Psoas muscle (tissue), 8 donors: ENCODE measurements at regions of chr21 and their contacts with region 1.

Region 1: GRCh38 chr21:44801468-44802395 is at the start of gene UBE2G2:
- DNase-seq: peak; percentile 86 to 92
- ATAC-seq: peak; percentile 96 to 99 (median 97)
- H3K4me3 ChIP-seq: peak within 1 kb of the TSS; percentile 86
- H3K27ac ChIP-seq: peak within 1 kb of the TSS; percentile 91
- H3K4me1 ChIP-seq: peaks cover 18% of the 10 kb centered on the region
- H3K27me3 ChIP-seq: no peaks in the 10 kb centered on the region
- CTCF ChIP-seq: no peak
- total RNA-seq, gene UBE2G2: 64.9 to 93.8 (median 81.7) TPM

Region 2: GRCh38 chr21:44723177-44724131 is 78.3 kb before region 1 on chr21:
- intact Hi-C with region 1: no loop called
- DNase-seq: no peak
- ATAC-seq: no peak
- H3K4me3 ChIP-seq: no peak overlapping the region
- H3K27ac ChIP-seq: no peak overlapping the region
- H3K4me1 ChIP-seq: no peaks in the 10 kb centered on the region
- H3K27me3 ChIP-seq: peaks cover 0 to 78% (median 10%) of the 10 kb centered on the region in 3 donors
- CTCF ChIP-seq: no peak

Region 3: GRCh38 chr21:44817506-44817880 is 15.8 kb after region 1 on chr21:
- intact Hi-C with region 1: loop called in 1 of 2 experiments (anchors 1 kb)
- DNase-seq: peak; percentile 91 to 97
- ATAC-seq: peak; percentile 92 to 96 (median 94)
- H3K4me3 ChIP-seq: peak overlapping the region; percentile 92
- H3K27ac ChIP-seq: peak overlapping the region; percentile 92
- H3K4me1 ChIP-seq: peaks cover 13% of the 10 kb centered on the region
- H3K27me3 ChIP-seq: no peaks in the 10 kb centered on the region
- CTCF ChIP-seq: no peak

Region 4: GRCh38 chr21:44873356-44874239 is 71.9 kb after region 1 on chr21 and contains the start of gene PTTG1IP:
- intact Hi-C with region 1: loop called (anchors 2 to 5 kb)
- DNase-seq: peak; percentile 99 to 100
- ATAC-seq: peak; percentile 76 to 82 (median 80)
- H3K4me3 ChIP-seq: peak within 1 kb of the TSS; percentile 90
- H3K27ac ChIP-seq: peak within 1 kb of the TSS; percentile 97
- H3K4me1 ChIP-seq: peaks cover 49% of the 10 kb centered on the region
- H3K27me3 ChIP-seq: no peaks in the 10 kb centered on the region
- CTCF ChIP-seq: no peak
- total RNA-seq, gene PTTG1IP: 49.6 to 72.1 (median 66.5) TPM

Region 5: DNA sequence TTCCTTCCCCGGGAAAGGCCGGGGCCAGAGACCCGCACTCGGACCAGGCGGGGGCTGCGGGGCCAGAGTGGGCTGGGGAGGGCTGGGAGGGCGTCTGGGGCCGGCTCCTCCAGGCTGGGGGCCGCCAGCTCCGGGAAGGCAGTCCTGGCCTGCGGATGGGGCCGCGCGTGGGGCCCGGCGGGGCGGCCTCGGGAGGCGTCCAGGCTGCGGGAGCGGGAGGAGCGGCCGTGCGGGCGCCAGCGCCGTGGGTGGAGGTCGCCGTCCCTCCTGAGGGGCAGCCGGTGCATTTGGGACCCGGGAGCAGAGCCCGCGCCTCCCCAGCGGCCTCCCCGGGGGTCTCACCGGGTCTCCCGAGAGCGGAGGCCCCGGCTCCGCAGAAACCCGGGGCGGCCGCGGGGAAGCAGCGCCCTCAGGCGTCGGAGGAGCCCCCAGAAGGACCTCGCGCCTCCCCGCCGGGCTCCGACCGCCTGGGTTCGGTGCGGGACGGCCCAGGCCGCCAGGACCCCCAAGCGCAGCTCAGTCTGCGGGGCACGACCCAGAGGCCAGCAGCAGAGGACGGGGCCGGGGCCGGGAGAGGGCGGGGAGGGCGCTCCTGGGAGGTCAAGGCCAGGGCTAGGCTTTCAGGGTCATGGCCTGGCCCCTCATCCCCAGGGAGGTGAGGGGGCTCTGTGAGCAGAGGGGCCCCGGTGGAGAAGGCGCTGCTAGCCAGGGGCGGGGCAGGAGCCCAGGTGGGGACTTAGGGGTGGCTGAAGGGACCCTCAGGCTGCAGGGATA is 130.9 kb after region 1 on chr21:
- intact Hi-C with region 1: loop called in 1 of 2 experiments (anchors 5 kb)
- DNase-seq: peak; percentile 49 to 70
- ATAC-seq: peak; percentile 59 to 69 (median 62)
- H3K4me3 ChIP-seq: peak overlapping the region; percentile 63
- H3K27ac ChIP-seq: no peak overlapping the region
- H3K4me1 ChIP-seq: peaks cover 23% of the 10 kb centered on the region
- H3K27me3 ChIP-seq: peaks cover 0 to 58% (median 16%) of the 10 kb centered on the region in 3 donors
- CTCF ChIP-seq: peak; percentile 49

Region 6: DNA sequence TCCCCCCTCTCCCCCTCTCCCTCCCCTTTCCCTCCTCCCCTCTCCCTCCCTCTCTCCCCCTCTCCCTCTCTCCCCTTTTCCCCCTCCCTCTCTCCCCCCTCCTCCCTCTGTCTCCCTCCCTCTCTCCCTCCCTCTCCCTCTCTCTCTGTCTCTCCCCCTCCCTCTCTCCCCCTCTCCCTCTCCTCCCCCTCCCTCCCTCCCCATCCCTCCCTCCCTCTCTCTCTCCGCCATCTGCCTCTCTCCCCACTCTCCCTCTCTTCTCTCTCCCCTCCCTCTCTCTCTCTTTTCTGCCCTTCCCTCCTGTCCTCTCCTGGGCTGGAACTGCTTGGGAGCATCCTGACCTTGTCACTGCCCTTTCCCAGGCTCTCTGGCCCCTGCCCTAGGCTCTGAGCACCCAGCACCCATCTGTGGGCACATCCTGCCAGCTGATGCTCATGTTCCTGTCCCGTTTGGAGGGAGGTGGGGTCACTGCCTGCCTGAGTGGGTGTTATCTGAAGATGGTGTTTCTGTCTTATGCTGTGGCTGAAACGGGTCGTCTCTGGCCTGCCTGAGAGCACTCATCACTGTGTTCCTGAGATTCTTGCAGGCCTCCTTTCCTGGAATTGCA is 1342.8 kb after region 1 on chr21:
- intact Hi-C with region 1: no loop called
- DNase-seq: peak in 1 of 2 donors; percentile 39
- ATAC-seq: no peak
- H3K4me3 ChIP-seq: no peak overlapping the region
- H3K27ac ChIP-seq: no peak overlapping the region
- H3K4me1 ChIP-seq: no peaks in the 10 kb centered on the region
- H3K27me3 ChIP-seq: no peaks in the 10 kb centered on the region
- CTCF ChIP-seq: no peak